ENCODE measurements at regions of chr4 and their contacts with region 1.

Region 1: DNA sequence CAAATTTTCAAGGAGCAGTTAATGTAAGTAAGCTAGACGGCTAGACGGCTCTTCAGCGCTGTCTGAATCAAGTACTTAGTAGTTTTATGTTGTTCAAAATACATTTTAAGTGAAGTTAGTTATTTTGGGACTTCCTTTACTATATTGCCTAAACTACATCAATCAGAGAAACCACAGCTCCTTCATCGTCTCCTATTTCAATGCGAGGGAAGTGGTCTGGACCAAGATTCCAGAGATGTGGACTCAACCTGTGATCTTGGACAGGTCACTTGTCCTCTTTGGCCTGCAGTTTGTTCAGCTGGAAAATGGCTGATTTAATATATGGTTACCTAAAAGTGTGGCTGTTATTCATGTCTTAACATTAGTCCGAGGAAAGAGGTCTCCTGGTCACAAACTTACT is 10.6 kb downstream of the ING2 start:
- DNase-seq: no peak
- H3K4me3 Mint-ChIP-seq: no peak overlapping the region
- H3K27ac Mint-ChIP-seq: no peak overlapping the region
- H3K4me1 Mint-ChIP-seq: peaks cover 7% of the 10 kb centered on the region
- H3K27me3 Mint-ChIP-seq: no peaks in the 10 kb centered on the region

Region 2: DNA sequence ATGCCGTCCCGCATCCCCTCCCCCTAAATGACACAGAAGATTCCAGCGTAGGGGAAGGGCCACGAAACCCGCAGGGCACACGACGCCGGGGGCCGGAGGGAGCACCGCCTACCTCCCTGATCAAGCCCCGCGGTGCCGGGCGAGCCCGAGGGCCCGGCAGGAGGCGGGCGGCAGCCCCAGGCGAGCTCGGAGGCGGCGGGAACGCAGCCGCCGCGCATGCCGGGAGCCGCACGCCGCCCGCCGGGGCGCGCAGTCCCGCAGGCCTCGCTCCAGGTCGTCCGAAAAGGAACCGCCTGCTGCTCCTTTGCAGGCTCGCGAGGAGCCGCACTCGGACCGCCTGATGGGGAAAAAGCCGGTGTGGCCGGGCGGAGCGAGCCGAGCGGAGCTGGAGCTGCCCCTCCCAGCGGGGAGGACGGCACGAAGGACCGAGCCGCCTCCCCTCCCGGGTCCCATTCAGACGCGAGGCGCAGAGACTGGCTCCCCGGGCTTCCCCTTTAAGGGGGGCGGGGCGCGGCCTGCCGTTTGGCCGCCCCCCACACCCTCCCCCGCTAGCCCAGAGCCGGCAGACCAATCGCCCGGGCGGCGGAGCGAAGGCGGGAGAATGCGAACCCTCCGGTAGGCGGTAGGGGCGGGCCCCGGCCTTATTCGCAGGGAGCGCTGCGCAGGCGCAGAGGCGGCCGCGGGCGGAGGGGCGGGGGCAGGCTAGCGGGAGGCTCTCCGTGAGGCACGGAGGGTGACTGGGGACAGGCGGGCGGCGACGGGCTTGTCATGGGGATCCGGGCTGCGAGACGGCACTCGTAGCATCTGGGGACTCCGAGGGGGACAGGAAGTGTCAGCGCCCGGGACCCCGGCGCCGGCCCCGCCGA is 11.1 kb before region 1 on chr4:
- CTCF ChIA-PET with region 1: interaction called, 4 read pairs
- POLR2A ChIA-PET with region 1: interaction called, 27 read pairs
- DNase-seq: peak; percentile 99
- H3K4me3 Mint-ChIP-seq: peak overlapping the region; percentile 93
- H3K27ac Mint-ChIP-seq: peak overlapping the region; percentile 93
- H3K4me1 Mint-ChIP-seq: peaks cover 46% of the 10 kb centered on the region
- H3K27me3 Mint-ChIP-seq: no peaks in the 10 kb centered on the region